ENCODE measurements at regions of chr2 and their contacts with region 1.

Region 1: DNA sequence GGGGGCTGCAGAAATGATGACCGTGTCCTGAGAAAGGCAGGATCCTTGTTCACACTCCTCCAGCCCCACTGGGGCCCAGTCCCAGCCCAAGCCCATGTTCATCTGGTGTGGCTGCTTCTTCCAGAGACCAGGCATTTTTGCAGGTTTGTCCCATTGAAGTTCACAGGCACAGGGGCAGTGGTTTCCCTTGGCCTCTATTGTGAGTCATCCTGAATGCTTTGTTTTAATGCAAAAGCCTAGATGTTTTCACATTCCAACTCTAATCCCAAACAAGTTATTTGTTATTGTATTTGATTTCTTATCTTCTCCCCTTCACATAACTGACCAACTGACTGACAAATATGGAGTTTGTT is 426.4 kb upstream of the ID2 start:
- DNase-seq: no peak
- H3K4me3 ChIP-seq: no peak overlapping the region
- H3K4me3 Mint-ChIP-seq: no peak overlapping the region
- H3K27ac ChIP-seq: no peak overlapping the region
- H3K27ac Mint-ChIP-seq: no peak overlapping the region
- H3K4me1 ChIP-seq: peaks cover 25 to 29% of the 10 kb centered on the region in 2 donors
- H3K4me1 Mint-ChIP-seq: peaks cover 28% of the 10 kb centered on the region
- H3K27me3 ChIP-seq: no peaks in the 10 kb centered on the region
- H3K27me3 Mint-ChIP-seq: peaks cover 0 to 2% (median 2%) of the 10 kb centered on the region in 3 donors
- CTCF ChIP-seq: no peak

Region 2: DNA sequence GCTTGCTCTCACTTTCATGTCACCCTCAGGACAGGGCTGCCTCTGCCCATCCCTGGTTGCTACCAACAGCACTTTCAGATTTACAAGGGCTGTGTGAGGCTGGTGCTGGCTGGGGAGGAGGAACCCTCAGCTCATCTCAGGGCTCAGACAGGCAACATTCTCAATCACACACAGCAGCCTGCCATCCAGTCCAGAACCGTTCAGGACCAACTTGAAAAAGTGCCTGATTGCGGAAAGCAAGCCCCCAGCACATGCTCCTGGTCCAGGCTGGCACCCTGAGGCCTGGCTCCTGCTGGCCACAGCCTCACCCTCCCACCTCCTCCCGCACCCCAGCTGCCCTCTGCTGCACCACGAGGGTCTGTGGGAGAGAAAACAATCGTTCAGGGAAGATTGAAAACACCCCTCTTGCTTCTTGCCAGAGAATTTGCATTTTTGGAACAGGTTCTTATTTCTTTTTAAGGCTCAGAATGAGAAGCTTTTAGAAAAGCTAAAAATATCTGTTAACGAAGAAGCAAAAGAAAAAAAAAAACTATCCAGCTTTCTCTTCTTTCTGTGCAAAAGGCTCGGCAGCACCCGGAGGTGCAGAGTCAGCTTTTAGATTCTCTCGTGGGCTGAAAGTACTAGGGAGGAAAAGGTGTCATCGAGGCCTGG is 22.6 kb after region 1 on chr2:
- intact Hi-C with region 1: loop called in 1 of 2 experiments (anchors 2 kb)
- DNase-seq: no peak
- H3K4me3 ChIP-seq: no peak overlapping the region
- H3K4me3 Mint-ChIP-seq: no peak overlapping the region
- H3K27ac ChIP-seq: no peak overlapping the region
- H3K27ac Mint-ChIP-seq: no peak overlapping the region
- H3K4me1 ChIP-seq: peaks cover 10 to 14% of the 10 kb centered on the region in 2 donors
- H3K4me1 Mint-ChIP-seq: peaks cover 30% of the 10 kb centered on the region
- H3K27me3 ChIP-seq: no peaks in the 10 kb centered on the region
- H3K27me3 Mint-ChIP-seq: peaks cover 0 to 6% (median 2%) of the 10 kb centered on the region in 3 donors
- CTCF ChIP-seq: no peak

Region 3: GRCh38 chr2:8368463-8368862 is 113.0 kb after region 1 on chr2:
- intact Hi-C with region 1: no loop called
- DNase-seq: no peak
- H3K4me3 ChIP-seq: no peak overlapping the region
- H3K4me3 Mint-ChIP-seq: no peak overlapping the region
- H3K27ac ChIP-seq: no peak overlapping the region
- H3K27ac Mint-ChIP-seq: peak overlapping the region in 1 of 7 donors; percentile 72
- H3K4me1 ChIP-seq: peaks cover 0 to 5% of the 10 kb centered on the region in 2 donors
- H3K4me1 Mint-ChIP-seq: peaks cover 11% of the 10 kb centered on the region
- H3K27me3 ChIP-seq: no peaks in the 10 kb centered on the region
- H3K27me3 Mint-ChIP-seq: peaks cover 1 to 4% (median 1%) of the 10 kb centered on the region in 3 donors
- CTCF ChIP-seq: no peak

Region 4: DNA sequence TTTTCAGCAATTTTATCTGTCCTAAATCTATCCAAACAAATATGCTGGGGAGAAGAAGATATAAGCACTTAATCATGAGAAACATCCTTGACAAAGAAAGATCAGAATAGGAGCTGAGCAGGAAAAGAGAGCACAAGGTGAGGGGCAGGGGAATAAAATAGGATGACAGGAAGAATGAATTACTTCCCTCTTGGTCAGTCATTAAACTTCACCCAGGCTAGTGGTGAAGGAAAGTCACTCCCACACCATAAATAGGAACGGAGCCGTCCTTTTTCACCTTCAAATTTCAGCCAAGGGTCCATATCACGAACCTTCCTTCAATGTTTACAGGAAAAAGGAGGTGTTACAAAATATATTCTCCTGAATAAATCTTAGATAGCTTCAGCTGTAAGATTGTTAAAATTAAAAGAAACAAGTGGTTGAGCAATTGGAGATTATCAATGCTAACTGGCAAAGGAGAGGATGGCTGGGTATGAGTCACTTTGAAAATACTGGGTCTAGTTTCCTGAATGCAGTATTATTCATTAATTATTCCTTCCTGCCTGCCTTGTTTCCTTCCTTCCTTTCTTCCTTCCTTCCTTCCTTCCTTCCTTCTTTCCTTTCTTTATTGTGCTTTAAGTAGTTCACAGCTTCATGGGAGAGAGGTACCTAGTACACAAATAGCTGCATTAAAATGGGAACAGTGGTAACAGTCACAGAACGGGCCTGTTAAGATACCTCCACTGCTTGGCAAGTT is 134.1 kb after region 1 on chr2:
- intact Hi-C with region 1: no loop called
- DNase-seq: peak in 2 of 3 donors; percentile 33 to 44
- H3K4me3 ChIP-seq: no peak overlapping the region
- H3K4me3 Mint-ChIP-seq: peak overlapping the region in 1 of 2 donors; percentile 5
- H3K27ac ChIP-seq: no peak overlapping the region
- H3K27ac Mint-ChIP-seq: no peak overlapping the region
- H3K4me1 ChIP-seq: peaks cover 20 to 24% of the 10 kb centered on the region in 2 donors
- H3K4me1 Mint-ChIP-seq: peaks cover 40% of the 10 kb centered on the region
- H3K27me3 ChIP-seq: no peaks in the 10 kb centered on the region
- H3K27me3 Mint-ChIP-seq: peaks cover 0 to 4% (median 0%) of the 10 kb centered on the region in 3 donors
- CTCF ChIP-seq: no peak

Measured in CD14-positive monocyte (primary cell).